Activated CD4-positive, alpha-beta memory T cell treated with anti-CD3 and anti-CD28 coated beads, Interleukin-2, amount 10 ng/mL, durations not matched to agents 7 days and 5 days (primary cell): ENCODE measurements at regions of chr2 and their contacts with region 1.

Region 1: DNA sequence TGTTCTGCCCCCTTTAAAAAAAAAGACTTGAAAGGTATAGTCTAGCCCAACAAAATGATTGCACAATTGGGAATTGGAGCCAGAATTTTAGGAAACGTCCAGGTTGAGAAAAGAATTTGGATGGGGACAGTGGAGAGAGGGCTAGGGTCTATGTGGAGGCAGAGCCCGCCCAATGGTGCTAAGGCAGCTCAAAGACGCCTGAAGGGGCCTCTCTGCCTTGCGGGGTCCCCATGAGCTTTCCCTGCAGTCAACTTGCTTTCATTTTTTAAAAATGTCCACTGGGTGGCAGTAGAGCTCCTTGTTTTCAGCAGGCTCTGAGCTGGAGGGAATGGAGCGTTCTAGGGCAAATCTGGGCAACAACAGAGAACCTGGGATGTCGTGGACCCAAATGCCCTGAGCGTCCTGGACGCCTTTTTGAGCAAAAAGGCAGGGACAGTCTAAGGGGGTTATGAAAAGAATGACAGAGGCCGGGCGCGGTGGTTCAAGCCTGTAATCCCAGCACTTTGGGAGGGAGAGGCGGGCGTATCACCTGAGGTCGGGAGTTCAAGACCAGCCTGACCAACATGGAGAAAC is 40.2 kb upstream of the ITM2C start:
- DNase-seq: peak; percentile 55
- H3K4me3 Mint-ChIP-seq: peak overlapping the region; percentile 21
- H3K27ac Mint-ChIP-seq: no peak overlapping the region
- H3K4me1 Mint-ChIP-seq: peaks cover 20% of the 10 kb centered on the region
- H3K27me3 Mint-ChIP-seq: peaks cover 33% of the 10 kb centered on the region

Region 2: GRCh38 chr2:230840301-230840700 is 15.8 kb after region 1 on chr2:
- CTCF ChIA-PET with region 1: interaction called, 18 read pairs
- POLR2A ChIA-PET with region 1: interaction called, 4 read pairs
- DNase-seq: no peak
- H3K4me3 Mint-ChIP-seq: no peak overlapping the region
- H3K27ac Mint-ChIP-seq: no peak overlapping the region
- H3K4me1 Mint-ChIP-seq: peaks cover 4% of the 10 kb centered on the region
- H3K27me3 Mint-ChIP-seq: peaks cover 38% of the 10 kb centered on the region

Region 3: DNA sequence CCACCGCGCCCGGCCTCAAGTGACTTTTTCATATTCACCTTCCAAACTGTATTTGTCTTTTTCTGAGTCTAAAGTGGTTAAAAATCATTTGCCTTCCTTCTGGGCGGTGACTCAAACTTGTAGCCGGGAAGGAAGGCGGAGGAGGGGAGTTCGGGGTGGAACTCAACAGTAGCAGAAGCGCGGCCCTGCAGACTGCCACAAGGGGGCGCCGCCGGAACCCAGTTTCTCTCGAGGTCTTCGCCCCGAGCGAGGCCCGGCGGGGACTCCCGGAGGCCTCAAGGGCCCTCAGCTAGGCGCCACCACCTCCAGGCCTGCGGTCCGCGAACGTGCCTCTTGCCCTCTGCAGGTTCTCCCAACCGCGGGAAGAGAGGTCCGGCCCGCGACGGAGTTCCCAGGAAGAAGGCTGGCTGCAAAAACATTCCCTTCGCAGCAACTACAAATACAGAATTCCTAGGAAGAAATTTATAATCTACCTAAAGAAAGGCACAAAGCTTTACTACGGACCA is 23.4 kb after region 1 on chr2:
- CTCF ChIA-PET with region 1: interaction called, 92 read pairs
- POLR2A ChIA-PET with region 1: interaction called, 4 read pairs
- DNase-seq: peak; percentile 89
- H3K4me3 Mint-ChIP-seq: no peak overlapping the region
- H3K27ac Mint-ChIP-seq: no peak overlapping the region
- H3K4me1 Mint-ChIP-seq: peaks cover 13% of the 10 kb centered on the region
- H3K27me3 Mint-ChIP-seq: peaks cover 61% of the 10 kb centered on the region